RWPE1 (cell line): ENCODE measurements at regions of chr16 and their contacts with region 1.

Region 1: DNA sequence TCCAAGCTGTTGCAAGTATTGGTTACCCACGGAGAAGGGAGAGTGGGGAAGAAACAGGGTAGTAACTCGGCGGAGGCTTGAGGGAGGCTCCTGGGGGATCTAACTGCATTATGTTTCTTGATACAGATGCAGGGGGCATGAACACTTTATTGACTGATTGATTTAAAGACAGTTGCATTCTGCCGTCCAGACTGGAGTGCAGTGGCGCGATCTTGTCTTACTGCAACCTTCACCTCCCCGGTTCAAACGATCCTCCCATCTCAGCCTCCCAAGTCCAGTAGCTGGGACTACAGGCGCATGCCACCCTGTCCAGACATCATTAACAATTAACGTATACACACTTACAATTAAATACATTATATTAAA is 15.1 kb upstream of the ERN2 start:
- DNase-seq: no peak
- H3K27ac ChIP-seq: no peak overlapping the region
- CTCF ChIP-seq: peak; percentile 24; the same call in 1 of the 2 replicates

Region 2: GRCh38 chr16:23678430-23679273 is 49.4 kb before region 1 on chr16 and contains the start of gene PLK1:
- CTCF ChIA-PET with region 1: interaction called, 11 read pairs
- POLR2A ChIA-PET with region 1: no interaction called
- DNase-seq: peak; percentile 97
- H3K27ac ChIP-seq: peak within 1 kb of the TSS; percentile 78
- CTCF ChIP-seq: no peak

Region 3: GRCh38 chr16:23742766-23743165 is 14.7 kb after region 1 on chr16:
- CTCF ChIA-PET with region 1: no interaction called
- POLR2A ChIA-PET with region 1: no interaction called
- DNase-seq: no peak
- H3K27ac ChIP-seq: no peak overlapping the region
- CTCF ChIP-seq: no peak

Region 4: GRCh38 chr16:23754594-23755483 is 26.7 kb after region 1 on chr16 and contains the start of gene CHP2:
- CTCF ChIA-PET with region 1: no interaction called
- POLR2A ChIA-PET with region 1: no interaction called
- DNase-seq: peak; percentile 20
- H3K27ac ChIP-seq: no peak within 1 kb of the TSS
- CTCF ChIP-seq: no peak